Thyroid gland (tissue), 4 donors: ENCODE measurements at regions of chr5 and their contacts with region 1.

Region 1: DNA sequence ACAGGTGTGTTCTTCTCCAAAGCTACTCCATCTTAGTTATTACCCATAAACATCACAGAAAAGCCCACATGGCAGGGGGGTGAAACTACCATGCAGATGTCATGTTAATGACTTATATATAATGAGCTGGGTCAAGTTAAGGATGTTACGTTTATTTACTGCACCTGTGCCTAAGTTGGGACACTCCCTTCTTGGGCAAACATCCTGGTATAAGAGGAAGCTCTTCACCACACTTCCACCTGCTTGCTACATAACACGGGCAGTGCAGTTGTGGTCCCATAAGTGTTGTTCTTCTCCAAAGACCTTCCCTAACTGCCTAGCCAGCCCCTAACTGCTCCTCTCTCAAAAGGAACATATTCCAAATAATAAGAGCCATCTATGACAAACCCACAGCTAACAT is 9.3 kb upstream of the ZCCHC9 start:
- DNase-seq: no peak
- H3K4me3 ChIP-seq: no peak overlapping the region
- H3K27ac ChIP-seq: no peak overlapping the region
- H3K4me1 ChIP-seq: no peaks in the 10 kb centered on the region
- H3K27me3 ChIP-seq: no peaks in the 10 kb centered on the region
- CTCF ChIP-seq: no peak
- POLR2A ChIP-seq: no peak

Region 2: GRCh38 chr5:81052325-81052724 is 239.8 kb before region 1 on chr5:
- intact Hi-C with region 1: no loop called
- DNase-seq: no peak
- H3K4me3 ChIP-seq: no peak overlapping the region
- H3K27ac ChIP-seq: no peak overlapping the region
- H3K4me1 ChIP-seq: no peaks in the 10 kb centered on the region
- H3K27me3 ChIP-seq: no peaks in the 10 kb centered on the region
- CTCF ChIP-seq: no peak
- POLR2A ChIP-seq: no peak

Region 3: DNA sequence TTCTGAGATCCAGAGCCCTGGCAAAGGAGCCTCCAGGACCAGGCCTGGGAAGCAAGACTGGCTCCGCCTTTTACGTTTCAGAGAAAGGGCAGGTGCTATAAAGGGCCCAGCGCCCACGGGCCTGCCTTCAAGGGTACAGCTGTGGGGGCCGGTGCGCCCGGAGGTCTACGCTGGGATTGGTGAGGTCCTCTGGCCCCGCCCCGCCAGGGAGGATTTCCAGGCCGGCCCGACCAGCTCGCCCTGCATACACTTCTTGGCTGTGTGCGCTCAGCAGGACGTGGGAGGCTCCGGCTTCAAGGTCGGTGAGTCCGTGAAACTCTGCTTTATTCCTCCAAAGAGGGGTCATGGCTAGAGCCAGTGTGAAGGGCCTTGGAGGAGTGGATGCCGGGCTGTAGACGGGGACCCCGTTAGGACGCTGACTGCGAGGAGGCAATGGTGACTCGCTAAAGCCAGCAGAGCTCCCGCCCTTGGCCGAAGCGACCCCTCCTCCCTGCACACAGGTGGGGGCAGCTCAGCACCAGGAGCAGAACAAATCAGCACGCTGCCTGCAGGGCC is 59.0 kb before region 1 on chr5 and contains the start of gene CKMT2:
- intact Hi-C with region 1: loop called (anchors 10 kb)
- DNase-seq: peak; percentile 91 to 94
- H3K4me3 ChIP-seq: peak within 1 kb of the TSS in 2 of 3 donors; percentile 31 to 36
- H3K27ac ChIP-seq: peak within 1 kb of the TSS; percentile 41 to 54 (median 49)
- H3K4me1 ChIP-seq: peaks cover 15 to 34% of the 10 kb centered on the region in 2 donors
- H3K27me3 ChIP-seq: no peaks in the 10 kb centered on the region
- CTCF ChIP-seq: no peak
- POLR2A ChIP-seq: peak in 1 of 2 donors; percentile 87
- total RNA-seq, gene CKMT2: 1.7 to 24.4 (median 16.1) TPM

Region 4: DNA sequence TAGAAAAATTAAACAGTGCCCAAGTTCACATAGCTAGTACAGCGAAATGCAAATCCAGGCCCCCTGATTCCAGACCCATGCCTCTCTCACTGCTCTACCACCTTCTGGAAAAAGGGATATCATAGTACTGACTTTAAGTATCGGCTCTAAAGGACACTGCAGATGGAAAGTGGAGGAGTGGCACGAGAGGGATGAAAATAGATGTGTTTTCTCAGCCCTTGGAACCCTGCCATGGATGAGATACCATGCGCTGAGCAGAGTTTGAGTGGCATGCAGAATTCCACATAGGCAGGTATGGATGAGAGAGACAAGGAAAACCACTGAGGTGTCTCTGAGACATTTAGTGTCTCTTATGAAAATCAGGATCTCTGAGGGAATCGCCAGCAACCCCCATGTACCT is 40.2 kb before region 1 on chr5:
- intact Hi-C with region 1: no loop called
- DNase-seq: no peak
- H3K4me3 ChIP-seq: no peak overlapping the region
- H3K27ac ChIP-seq: no peak overlapping the region
- H3K4me1 ChIP-seq: no peaks in the 10 kb centered on the region
- H3K27me3 ChIP-seq: no peaks in the 10 kb centered on the region
- CTCF ChIP-seq: no peak
- POLR2A ChIP-seq: no peak

Region 5: GRCh38 chr5:81383867-81384266 is 91.7 kb after region 1 on chr5:
- intact Hi-C with region 1: no loop called
- DNase-seq: no peak
- H3K4me3 ChIP-seq: no peak overlapping the region
- H3K27ac ChIP-seq: no peak overlapping the region
- H3K4me1 ChIP-seq: no peaks in the 10 kb centered on the region
- H3K27me3 ChIP-seq: no peaks in the 10 kb centered on the region
- CTCF ChIP-seq: no peak
- POLR2A ChIP-seq: no peak

Region 6: DNA sequence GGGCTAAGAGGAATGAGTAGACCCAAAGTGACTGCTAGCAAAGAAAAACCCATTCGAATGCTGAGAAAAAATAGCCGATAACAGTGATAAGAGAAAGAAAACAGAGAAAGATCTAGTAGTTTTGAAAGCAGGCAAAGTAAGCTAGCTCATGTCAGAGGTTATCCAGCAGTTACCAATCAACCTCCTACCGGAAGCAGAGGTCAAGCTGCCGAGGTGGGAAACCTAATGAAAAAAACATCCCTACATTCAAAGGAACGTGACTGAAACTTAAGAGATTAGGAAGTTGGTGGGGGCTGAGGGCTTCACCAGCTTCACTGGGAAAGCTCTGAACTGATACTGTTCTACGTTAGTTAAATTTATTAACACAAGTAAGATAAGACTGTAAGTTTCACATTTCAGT is 426.2 kb after region 1 on chr5:
- intact Hi-C with region 1: no loop called
- DNase-seq: no peak
- H3K4me3 ChIP-seq: no peak overlapping the region
- H3K27ac ChIP-seq: no peak overlapping the region
- H3K4me1 ChIP-seq: peaks cover 0 to 7% of the 10 kb centered on the region in 2 donors
- H3K27me3 ChIP-seq: no peaks in the 10 kb centered on the region
- CTCF ChIP-seq: no peak
- POLR2A ChIP-seq: no peak